MCF 10A (cell line): ENCODE measurements at regions of chr19 and their contacts with region 1.

Region 1: GRCh38 chr19:34336781-34337271 is 28.2 kb upstream of the GPI start:
- DNase-seq: peak; percentile 52
- H3K4me3 Mint-ChIP-seq: no peak overlapping the region
- H3K27ac Mint-ChIP-seq: no peak overlapping the region
- H3K4me1 Mint-ChIP-seq: no peaks in the 10 kb centered on the region
- H3K27me3 Mint-ChIP-seq: no peaks in the 10 kb centered on the region
- CTCF ChIP-seq: peak; percentile 67

Region 2: DNA sequence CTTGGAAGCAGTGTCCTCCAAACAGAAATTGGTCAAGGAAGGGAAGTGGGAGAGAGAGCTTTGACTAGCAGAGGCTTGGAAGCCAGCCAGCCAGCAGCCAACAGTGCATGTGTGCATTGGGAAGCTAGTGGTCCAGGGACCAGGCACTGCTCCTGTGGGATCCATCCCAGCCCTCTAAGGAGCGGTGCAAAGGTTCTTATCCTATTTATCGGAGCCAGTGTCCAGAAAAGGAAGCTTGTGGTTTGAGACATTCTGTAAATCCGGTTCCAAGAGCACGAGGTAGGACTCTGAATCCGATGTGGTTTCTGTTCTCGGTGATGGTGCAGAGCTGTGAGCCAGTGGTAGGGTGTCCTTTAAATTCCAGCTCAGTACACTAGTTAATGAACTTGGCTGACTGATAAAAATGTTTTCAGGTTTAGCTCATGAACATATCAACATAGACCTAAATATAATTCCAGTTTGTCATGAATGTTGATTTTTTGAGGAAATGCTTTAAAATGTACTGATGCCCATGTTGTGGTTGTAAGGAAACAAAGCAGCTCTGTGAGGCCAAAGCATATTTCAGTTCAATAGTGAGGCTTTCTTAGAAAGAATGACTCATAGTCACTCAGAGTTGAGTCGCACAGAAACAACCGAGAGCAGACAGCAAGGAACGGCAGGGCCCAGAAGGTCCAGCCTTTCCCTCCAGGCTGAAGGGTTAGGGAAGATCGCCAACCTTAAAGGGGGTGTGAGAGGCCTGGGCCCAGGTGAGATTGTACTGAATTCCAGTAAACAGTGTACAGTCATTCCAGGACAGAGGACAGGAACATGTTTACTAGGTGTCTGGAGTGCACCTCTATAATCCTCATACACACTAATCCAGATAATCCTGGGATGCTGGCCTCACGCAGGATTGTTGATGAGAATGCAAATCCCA is 104.0 kb before region 1 on chr19:
- CTCF ChIA-PET with region 1: interaction called, 3 read pairs
- POLR2A ChIA-PET with region 1: interaction called, 5 read pairs
- intact Hi-C with region 1: loop called (anchors 5 kb)
- DNase-seq: peak; percentile 71
- H3K4me3 Mint-ChIP-seq: no peak overlapping the region
- H3K27ac Mint-ChIP-seq: peak overlapping the region; percentile 55
- H3K4me1 Mint-ChIP-seq: peaks cover 12% of the 10 kb centered on the region
- H3K27me3 Mint-ChIP-seq: no peaks in the 10 kb centered on the region
- CTCF ChIP-seq: no peak

Region 3: DNA sequence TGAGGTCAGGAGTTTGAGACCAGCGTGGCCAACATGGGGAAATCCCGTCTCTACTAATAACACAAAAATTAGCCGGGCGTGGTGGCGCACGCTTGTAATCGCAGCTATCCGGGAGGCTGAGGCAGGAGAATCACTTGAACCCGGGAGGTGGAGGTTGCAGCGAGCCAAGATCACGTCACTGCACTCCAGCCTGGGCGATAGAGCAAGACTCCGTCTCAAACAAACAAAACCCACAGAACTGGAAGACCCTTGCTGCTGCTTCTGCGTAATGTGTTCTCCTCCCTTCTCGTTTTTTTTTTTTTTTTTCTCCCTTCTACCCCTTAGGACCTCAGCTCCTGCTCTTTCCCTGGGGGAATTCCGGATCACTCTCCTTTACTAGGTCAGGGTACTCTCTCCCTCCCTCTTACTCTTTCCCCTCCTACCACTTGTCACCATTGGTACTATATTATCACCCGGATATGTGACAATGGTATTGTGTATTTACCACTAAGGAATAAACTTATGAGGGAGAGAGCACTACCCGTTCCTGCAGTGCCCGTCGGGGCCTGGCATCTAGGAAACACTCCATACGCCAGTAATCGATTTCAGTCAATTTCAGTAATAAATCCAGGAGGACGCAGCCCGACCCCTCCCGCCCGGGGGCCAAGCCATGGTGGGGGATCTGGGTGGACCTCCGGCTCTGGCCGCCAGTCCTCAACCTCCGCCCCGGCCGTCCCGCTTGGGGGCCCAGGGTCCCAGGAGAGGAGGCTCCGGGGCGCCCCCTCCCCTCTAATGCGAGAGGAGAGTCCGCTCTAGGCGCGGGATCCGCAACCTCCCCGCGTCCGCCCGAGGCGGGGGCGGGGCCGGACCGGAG is 82.9 kb before region 1 on chr19:
- CTCF ChIA-PET with region 1: no interaction called
- POLR2A ChIA-PET with region 1: no interaction called
- intact Hi-C with region 1: loop called (anchors 2 kb)
- DNase-seq: peak; percentile 64
- H3K4me3 Mint-ChIP-seq: peak overlapping the region; percentile 79
- H3K27ac Mint-ChIP-seq: peak overlapping the region; percentile 93
- H3K4me1 Mint-ChIP-seq: peaks cover 7% of the 10 kb centered on the region
- H3K27me3 Mint-ChIP-seq: no peaks in the 10 kb centered on the region
- CTCF ChIP-seq: no peak

Region 4: GRCh38 chr19:34325981-34326787 is 10.6 kb before region 1 on chr19:
- CTCF ChIA-PET with region 1: interaction called, 10 read pairs
- POLR2A ChIA-PET with region 1: interaction called, 3 read pairs
- intact Hi-C with region 1: no loop called
- DNase-seq: no peak
- H3K4me3 Mint-ChIP-seq: no peak overlapping the region
- H3K27ac Mint-ChIP-seq: no peak overlapping the region
- H3K4me1 Mint-ChIP-seq: peaks cover 5% of the 10 kb centered on the region
- H3K27me3 Mint-ChIP-seq: no peaks in the 10 kb centered on the region
- CTCF ChIP-seq: no peak

Region 5: DNA sequence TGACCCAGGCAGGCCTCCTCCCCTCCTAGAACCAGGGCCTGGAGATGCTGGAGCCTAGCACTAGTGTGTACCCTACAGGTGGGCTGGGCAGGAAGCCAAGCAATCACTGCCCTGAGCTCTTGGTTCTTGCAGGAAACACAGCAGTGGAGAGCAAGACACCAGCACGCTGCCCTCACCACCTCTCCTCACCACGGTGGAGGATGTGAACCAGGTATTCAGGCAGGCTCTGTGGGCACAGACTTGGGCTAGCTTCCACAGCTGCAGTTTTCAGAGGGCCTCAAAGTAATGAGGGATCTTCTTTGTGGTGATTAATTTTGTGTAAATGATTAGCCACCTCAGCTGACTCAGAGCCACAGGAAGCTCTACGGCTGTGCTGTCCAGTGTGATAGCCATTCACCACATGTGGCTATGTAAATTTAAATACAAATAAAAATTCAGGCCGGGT is 14.6 kb after region 1 on chr19:
- CTCF ChIA-PET with region 1: interaction called, 37 read pairs
- POLR2A ChIA-PET with region 1: no interaction called
- intact Hi-C with region 1: no loop called
- DNase-seq: no peak
- H3K4me3 Mint-ChIP-seq: no peak overlapping the region
- H3K27ac Mint-ChIP-seq: no peak overlapping the region
- H3K4me1 Mint-ChIP-seq: no peaks in the 10 kb centered on the region
- H3K27me3 Mint-ChIP-seq: no peaks in the 10 kb centered on the region
- CTCF ChIP-seq: no peak